HEK293 (cell line): ENCODE measurements at regions of chr11 and their contacts with region 1.

Region 1: DNA sequence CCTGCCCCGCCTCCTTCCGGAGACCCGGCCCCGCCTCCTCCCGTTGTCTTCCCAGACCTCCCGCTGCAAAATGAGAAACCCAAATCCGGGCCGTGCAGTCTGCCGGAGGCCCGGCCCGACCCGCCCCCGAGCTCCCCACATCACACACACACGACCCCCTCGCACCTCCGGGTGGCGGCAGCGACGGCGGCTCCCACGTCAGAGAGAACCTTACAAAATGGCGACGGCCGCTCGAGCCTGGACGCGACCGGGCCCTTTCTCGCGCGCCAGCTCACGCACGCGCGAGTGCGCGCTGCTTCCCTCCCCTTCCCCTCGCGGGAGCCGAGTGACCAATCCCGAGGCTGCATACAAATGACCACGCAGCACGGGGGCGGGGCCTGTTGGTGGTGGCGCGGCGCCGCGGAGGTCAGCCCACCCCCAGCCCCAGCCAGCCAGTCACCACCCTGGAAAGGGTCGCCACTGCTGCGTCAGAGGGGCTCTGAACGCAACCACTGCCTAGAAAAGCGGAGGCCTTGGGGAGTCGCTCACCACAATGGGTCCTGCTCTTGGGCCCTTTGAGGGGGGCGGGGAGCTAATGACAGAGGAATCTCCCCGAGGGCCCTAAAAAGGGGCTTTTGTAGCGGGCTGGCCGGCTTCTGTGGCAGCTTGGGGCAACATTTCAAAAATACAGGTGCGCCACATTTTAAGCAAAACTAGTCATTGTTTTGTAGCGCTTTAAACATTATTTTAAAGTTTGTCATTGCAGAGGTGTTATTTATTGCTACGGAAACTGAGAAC is at the start of gene RBM4B:
- H3K4me3 ChIP-seq: peak within 1 kb of the TSS; percentile 76
- H3K27ac ChIP-seq: peak within 1 kb of the TSS; percentile 72
- H3K4me1 ChIP-seq: no peaks in the 10 kb centered on the region
- CTCF ChIP-seq: no peak

Region 2: DNA sequence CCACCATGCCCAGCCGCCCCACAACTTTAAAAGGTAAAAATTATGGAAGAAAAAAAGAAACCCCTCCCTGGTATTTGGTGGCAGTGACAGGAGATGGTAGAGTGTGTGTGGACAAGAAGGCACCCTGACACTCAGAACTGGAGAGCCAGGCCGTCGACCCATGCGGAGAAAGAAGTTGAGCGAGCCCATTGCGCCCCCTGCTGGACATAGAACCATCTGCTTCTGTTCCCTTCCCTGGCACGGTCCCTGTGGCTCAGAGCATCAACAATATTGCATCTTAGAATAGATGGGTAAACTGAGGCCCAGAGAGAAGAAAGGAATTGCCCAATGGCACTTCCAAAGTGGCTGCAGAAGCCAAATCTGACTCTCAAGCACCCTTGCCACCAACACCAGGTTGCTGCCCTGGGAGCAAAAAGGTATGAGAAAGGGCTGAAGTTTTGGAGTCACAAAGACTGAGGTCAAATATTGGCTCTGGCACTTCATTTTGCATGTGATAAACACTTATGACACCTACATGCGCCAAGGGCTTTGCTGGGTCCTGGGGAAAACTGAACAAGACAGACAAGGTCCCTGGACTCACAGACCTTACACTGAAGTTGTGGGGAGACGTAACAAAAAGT is 247.7 kb before region 1 on chr11:
- CTCF ChIA-PET with region 1: interaction called, 12 read pairs
- POLR2A ChIA-PET with region 1: no interaction called
- H3K4me3 ChIP-seq: no peak overlapping the region
- H3K27ac ChIP-seq: no peak overlapping the region
- H3K4me1 ChIP-seq: no peaks in the 10 kb centered on the region
- CTCF ChIP-seq: peak; percentile 58

Region 3: DNA sequence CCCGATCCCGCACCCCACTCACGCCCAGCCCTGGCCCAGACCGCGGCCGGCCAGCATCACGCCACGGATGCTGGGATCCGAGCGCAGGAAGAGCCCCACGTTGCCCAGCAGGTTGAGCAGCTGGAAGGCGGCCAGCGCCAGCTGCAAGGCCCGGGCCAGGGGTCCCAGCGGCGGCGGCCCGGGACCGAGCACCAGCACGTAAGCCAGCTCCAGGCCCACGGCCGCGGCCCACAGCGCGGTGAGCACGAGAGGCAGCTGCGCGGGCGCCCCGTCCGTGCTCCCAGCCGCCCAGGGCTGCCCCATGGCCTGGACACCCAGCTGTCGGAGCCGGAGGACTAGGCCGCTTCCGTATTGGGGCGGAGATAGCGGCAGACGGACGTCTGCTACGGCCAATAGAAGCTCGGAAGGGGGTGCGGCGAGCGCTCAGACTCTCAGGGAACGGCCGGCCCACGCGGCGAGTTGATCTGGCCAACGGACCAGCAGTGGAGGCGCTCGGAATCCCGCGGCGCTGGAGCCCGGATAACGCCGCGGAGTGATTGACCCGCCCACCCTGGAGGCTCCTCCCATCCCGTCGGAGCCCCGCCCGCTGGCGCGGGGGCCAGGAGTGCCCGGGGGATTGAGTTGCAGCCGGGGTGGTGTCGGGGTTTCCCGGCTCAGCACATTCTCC is 132.0 kb before region 1 on chr11 and contains the start of gene ZDHHC24:
- CTCF ChIA-PET with region 1: interaction called, 10 read pairs
- POLR2A ChIA-PET with region 1: interaction called, 12 read pairs
- H3K4me3 ChIP-seq: peak within 1 kb of the TSS; percentile 73
- H3K27ac ChIP-seq: peak within 1 kb of the TSS; percentile 65; the same call in 1 of the 2 replicates
- H3K4me1 ChIP-seq: no peaks in the 10 kb centered on the region
- CTCF ChIP-seq: no peak

Region 4: GRCh38 chr11:66592457-66593302 is 85.1 kb before region 1 on chr11 and contains the starts of genes CCDC87 and CCS:
- CTCF ChIA-PET with region 1: interaction called, 16 read pairs
- POLR2A ChIA-PET with region 1: interaction called, 12 read pairs
- H3K4me3 ChIP-seq: peak within 1 kb of the TSS; percentile 67
- H3K27ac ChIP-seq: peak within 1 kb of the TSS; percentile 11; the same call in 1 of the 2 replicates
- H3K4me1 ChIP-seq: no peaks in the 10 kb centered on the region
- CTCF ChIP-seq: peak; percentile 99

Region 5: GRCh38 chr11:66628061-66628603 is 49.7 kb before region 1 on chr11:
- CTCF ChIA-PET with region 1: no interaction called
- POLR2A ChIA-PET with region 1: no interaction called
- H3K4me3 ChIP-seq: no peak overlapping the region
- H3K27ac ChIP-seq: no peak overlapping the region
- H3K4me1 ChIP-seq: no peaks in the 10 kb centered on the region
- CTCF ChIP-seq: no peak

Region 6: GRCh38 chr11:66638177-66639065 is 39.4 kb before region 1 on chr11 and contains the start of gene RBM4:
- CTCF ChIA-PET with region 1: interaction called, 6 read pairs
- POLR2A ChIA-PET with region 1: interaction called, 38 read pairs
- H3K4me3 ChIP-seq: peak within 1 kb of the TSS; percentile 62
- H3K27ac ChIP-seq: peak within 1 kb of the TSS; percentile 77
- H3K4me1 ChIP-seq: no peaks in the 10 kb centered on the region; the same call in 1 of the 2 replicates
- CTCF ChIP-seq: peak; percentile 84

Region 7: DNA sequence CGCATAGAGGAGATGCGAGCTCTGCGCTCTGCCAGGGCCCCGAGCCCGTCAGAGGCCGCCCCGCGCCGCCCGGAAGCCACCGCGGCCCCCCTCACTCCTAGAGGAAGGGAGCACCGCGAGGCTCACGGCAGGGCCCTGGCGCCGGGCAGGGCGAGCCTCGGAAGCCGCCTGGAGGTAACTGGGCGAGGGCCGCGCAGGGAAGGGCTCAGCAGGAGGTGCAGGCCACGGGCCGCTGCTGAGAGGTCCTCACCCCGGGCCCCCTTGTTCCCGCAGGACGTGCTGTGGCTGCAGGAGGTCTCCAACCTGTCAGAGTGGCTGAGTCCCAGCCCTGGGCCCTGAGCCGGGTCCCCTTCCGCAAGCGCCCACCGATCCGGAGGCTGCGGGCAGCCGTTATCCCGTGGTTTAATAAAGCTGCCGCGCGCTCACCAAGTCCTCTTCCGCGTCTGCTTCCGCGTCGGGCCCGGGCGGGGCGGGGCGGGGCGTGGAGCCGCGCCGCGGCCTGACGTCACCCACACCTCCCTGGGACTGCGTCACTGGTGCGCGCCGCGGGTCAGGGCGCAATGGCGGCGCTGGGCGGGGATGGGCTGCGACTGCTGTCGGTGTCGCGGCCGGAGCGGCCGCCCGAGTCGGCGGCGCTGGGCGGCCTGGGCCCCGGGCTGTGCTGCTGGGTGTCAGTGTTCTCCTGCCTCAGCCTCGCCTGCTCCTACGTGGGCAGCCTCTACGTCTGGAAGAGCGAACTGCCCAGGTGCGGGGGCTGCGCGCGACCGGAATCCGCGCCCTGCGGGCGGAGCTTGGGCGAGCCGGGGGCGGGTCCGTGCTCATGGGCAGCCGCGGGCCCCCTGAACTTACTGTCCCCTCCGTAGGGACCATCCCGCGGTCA is 165.3 kb after region 1 on chr11 and contains the start of gene RCE1:
- CTCF ChIA-PET with region 1: interaction called, 4 read pairs
- POLR2A ChIA-PET with region 1: interaction called, 10 read pairs
- H3K4me3 ChIP-seq: peak within 1 kb of the TSS; percentile 71
- H3K27ac ChIP-seq: peak within 1 kb of the TSS; percentile 86
- H3K4me1 ChIP-seq: no peaks in the 10 kb centered on the region
- CTCF ChIP-seq: no peak; the same call in 1 of the 2 replicates